Thyroid gland (tissue), 4 donors: ENCODE measurements at regions of chr15 and their contacts with region 1.

Region 1: DNA sequence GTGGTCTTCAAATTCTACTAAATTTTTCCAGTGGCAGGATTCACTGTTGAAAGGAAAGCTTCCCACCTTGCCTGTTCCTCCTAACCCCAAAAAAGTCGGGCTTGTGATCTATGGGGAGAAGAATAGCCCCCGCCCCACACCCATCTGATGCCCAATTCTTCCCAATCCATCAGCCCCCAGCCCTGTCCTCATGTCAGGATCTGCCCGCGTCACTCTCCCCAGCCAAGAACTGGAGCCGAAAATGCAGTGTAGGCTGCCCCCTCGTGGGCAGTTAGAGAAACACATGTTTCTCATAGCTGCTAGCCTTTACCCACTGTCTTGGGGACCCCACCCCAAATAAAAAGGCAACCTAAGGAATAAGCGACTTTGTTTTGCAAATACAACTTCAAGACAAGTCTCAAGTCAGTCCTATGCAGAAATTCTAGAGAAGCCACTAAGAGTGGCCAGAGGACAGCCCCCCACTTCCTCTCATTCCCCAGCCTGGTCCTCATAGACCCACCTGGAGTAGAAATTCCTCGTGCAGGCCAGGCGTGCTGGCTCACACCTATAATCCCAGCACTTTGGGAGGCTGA is 13.0 kb upstream of the CSK start:
- DNase-seq: peak; percentile 67 to 74
- H3K4me3 ChIP-seq: no peak overlapping the region
- H3K27ac ChIP-seq: no peak overlapping the region
- H3K4me1 ChIP-seq: peaks cover 0 to 8% of the 10 kb centered on the region in 2 donors
- H3K27me3 ChIP-seq: no peaks in the 10 kb centered on the region
- CTCF ChIP-seq: peak; percentile 42 to 87 (median 76)
- POLR2A ChIP-seq: no peak

Region 2: DNA sequence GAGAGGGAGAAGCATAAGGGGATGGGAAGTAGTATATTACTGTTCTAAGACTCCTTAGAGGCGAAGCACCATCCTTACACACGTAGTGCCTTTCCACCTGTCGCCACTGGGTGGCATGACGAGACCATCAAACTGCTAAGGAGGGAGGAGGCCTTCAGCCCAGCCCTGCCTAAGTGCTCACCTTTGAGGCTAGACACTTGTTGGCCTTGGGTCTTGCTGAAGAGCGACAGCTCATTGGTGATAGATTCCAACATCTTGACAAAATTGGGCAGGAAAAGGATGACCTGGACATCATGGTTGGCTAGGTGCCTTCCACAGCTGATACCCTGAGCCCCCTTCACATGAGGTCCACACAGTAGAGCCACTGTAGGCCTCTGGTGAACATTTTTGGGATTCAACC is 133.6 kb before region 1 on chr15:
- intact Hi-C with region 1: loop called (anchors 2 kb)
- DNase-seq: peak; percentile 64 to 73
- H3K4me3 ChIP-seq: no peak overlapping the region
- H3K27ac ChIP-seq: no peak overlapping the region
- H3K4me1 ChIP-seq: no peaks in the 10 kb centered on the region
- H3K27me3 ChIP-seq: no peaks in the 10 kb centered on the region
- CTCF ChIP-seq: peak; percentile 78 to 97 (median 85)
- POLR2A ChIP-seq: no peak

Region 3: DNA sequence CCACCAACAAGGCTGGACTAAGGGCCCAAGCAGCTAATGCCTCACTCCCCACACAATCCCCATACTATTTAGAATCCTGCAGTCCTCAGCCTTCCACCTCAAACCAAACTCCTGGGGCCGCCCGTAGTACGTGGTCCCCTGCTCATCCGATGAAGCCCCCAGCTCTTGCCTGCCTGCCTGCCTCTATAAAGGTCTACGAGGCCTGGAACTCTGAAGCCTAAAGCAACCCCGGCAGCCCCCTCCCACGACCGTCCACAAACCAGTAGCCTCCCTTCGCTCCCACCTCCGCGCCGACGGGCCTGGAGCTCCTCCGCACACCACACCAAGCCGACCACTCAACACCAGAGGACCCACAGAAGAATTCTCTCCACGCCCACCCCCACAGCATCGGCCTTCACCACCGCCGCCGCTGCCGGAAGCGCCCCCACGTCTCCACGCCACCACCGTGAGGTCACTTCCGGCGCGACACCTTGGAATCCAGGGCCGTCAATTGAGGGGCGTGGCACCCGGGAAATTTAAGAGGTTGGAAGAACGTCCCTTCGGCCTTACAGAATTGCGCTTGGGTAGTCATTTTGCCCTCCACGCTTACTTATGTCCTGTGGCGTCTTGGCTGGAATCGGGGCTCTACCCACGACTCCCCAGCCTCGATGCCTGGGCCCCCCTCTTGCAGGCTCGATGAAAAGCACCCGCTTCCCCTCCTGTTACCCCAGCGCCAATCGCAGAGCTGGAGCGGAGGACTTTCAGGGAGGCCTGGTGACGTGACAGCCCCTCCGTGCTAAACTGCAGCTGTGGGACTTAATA is 73.1 kb before region 1 on chr15 and contains the start of gene EDC3:
- intact Hi-C with region 1: loop called (anchors 2 kb)
- DNase-seq: peak; percentile 90 to 93
- H3K4me3 ChIP-seq: peak within 1 kb of the TSS; percentile 54 to 95 (median 72)
- H3K27ac ChIP-seq: peak within 1 kb of the TSS; percentile 28 to 88 (median 72)
- H3K4me1 ChIP-seq: peaks cover 14 to 19% of the 10 kb centered on the region in 2 donors
- H3K27me3 ChIP-seq: no peaks in the 10 kb centered on the region
- CTCF ChIP-seq: no peak
- POLR2A ChIP-seq: peak in 1 of 2 donors; percentile 61
- total RNA-seq, gene EDC3: 16.3 to 64.7 (median 25.7) TPM

Region 4: GRCh38 chr15:74835307-74835823 is 66.5 kb after region 1 on chr15:
- intact Hi-C with region 1: loop called (anchors 5 kb)
- DNase-seq: peak; percentile 58 to 65
- H3K4me3 ChIP-seq: no peak overlapping the region
- H3K27ac ChIP-seq: no peak overlapping the region
- H3K4me1 ChIP-seq: no peaks in the 10 kb centered on the region
- H3K27me3 ChIP-seq: no peaks in the 10 kb centered on the region
- CTCF ChIP-seq: peak; percentile 32 to 75 (median 59)
- POLR2A ChIP-seq: no peak

Region 5: GRCh38 chr15:74869726-74870407 is 101.0 kb after region 1 on chr15:
- intact Hi-C with region 1: no loop called
- DNase-seq: peak; percentile 34 to 43
- H3K4me3 ChIP-seq: no peak overlapping the region
- H3K27ac ChIP-seq: peak overlapping the region; percentile 35 to 78 (median 67)
- H3K4me1 ChIP-seq: peaks cover 46 to 78% of the 10 kb centered on the region in 2 donors
- H3K27me3 ChIP-seq: no peaks in the 10 kb centered on the region
- CTCF ChIP-seq: no peak
- POLR2A ChIP-seq: no peak

Region 6: GRCh38 chr15:74906446-74907162 is 137.7 kb after region 1 on chr15 and contains the start of gene FAM219B:
- intact Hi-C with region 1: loop called (anchors 2 kb)
- DNase-seq: peak; percentile 93 to 96
- H3K4me3 ChIP-seq: peak within 1 kb of the TSS; percentile 21 to 98 (median 96)
- H3K27ac ChIP-seq: peak within 1 kb of the TSS; percentile 87 to 97 (median 93)
- H3K4me1 ChIP-seq: peaks cover 10 to 20% of the 10 kb centered on the region in 2 donors
- H3K27me3 ChIP-seq: no peaks in the 10 kb centered on the region
- CTCF ChIP-seq: no peak
- POLR2A ChIP-seq: peak; percentile 64 to 93
- total RNA-seq, gene FAM219B: 72.1 to 136 (median 88.2) TPM

Region 7: DNA sequence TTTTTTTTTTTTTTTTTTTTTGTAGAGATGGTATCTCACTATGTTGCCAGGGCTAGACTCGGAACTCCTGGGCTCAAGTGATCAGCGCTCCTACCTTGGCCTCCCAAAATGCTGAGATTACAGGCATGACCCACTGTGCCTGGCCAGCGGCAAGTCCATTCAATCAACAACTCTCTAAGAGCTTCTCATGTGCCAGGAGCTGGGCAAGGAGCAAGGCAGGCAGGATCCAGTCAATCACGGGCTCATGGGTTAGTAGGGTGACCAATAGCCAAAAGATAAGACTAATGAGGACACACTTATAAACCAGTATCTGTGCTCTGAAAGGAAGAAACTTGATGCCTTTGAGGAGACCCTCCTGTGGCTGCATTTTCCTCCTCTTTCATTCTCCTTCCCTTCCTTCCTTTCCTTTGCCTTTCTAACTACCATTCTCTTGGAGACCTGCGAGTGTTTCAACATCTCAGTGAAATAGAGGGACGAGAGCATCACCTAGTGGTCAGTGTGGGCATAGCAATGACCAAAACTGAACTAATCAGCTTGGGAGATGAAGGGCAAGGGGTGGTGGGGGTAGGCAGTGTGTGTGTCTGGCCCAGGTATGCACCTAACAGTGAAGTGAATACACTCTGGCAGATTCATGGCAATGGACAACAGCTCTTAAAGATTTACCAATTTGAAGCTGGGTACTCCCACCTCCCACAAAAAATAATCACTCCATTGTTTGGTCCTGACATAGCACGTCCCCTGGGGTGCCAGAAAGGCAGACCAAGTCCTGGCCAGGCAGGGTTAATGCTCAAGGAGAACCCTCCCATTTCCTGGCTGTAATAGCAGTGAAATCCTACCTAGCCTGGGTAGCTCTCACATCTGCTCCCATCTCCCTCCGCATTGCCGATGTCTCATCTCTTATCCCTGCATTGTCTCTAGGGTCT is 181.5 kb after region 1 on chr15:
- intact Hi-C with region 1: loop called (anchors 5 kb)
- DNase-seq: peak; percentile 77 to 80
- H3K4me3 ChIP-seq: no peak overlapping the region
- H3K27ac ChIP-seq: no peak overlapping the region
- H3K4me1 ChIP-seq: peaks cover 10 to 18% of the 10 kb centered on the region in 2 donors
- H3K27me3 ChIP-seq: no peaks in the 10 kb centered on the region
- CTCF ChIP-seq: peak; percentile 94 to 100 (median 99)
- POLR2A ChIP-seq: no peak